Calu3 (cell line): ENCODE measurements at regions of chr13 and their contacts with region 1.

Region 1: DNA sequence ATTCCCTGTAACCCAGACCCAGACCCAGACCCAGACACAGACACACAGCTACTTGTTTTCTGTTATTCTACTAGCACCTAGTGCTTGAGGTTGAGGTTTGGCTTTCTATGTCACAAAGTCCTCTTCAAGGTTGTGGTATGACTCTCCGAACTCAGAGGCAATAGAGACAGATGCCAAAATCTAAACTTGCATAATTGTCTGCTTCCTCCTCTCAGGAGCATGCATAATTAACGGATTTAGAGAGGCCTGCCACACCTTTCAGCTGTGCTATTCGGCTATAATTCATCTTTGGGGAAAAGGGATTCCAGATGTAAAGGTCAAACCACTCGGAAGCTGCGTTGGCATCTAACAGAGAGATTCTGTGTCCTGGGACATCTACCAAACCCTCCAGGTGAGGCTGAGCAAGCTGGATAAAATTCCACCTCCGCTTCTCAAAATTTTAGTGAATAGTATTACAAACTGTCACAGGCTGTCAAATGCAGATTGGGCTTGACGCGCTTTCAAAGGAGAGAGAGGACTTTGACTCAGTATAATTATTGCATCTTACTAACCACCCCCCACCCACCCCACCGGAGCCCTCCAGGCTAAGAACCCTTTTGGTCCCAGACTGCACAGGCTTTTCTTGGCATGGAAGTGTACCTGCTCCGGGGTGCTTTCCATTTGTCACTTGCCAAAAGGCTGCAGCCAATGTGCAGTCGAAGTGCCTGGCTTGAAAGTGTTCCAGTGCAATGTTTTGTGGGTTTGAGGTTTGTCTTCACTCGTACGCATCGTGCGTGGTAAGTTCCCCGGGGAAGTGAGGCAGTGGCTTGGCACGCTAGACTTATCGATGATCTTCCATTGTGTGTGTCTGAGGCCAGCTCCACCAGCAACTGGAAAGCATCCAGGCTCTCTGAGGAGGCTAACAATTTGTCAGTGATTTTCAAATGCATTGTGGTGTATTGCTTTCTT is 194.1 kb downstream of the TDRD3 start:
- DNase-seq: no peak
- H3K4me3 Mint-ChIP-seq: no peak overlapping the region
- H3K27ac Mint-ChIP-seq: no peak overlapping the region
- H3K4me1 Mint-ChIP-seq: no peaks in the 10 kb centered on the region
- H3K27me3 Mint-ChIP-seq: no peaks in the 10 kb centered on the region
- CTCF ChIP-seq: no peak

Region 2: DNA sequence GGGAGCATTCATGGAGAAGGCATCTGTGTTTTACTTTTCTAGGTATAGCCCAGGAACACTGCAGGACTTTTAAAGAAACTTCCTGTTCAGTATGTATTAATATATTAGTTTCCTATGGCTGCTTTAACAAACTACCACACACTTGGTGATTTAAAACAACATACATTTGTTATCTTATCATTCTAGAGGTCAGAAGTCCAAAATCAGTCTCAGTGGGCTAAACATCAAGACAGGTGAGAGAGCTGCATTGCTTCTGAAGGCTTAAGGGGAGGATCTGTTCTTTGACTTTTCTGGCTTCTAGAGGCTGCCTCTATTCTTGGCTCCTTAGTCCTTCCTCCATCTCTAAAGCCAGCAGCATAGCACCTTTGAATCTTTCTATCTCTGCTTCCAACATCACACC is 389.8 kb before region 1 on chr13:
- CTCF ChIA-PET with region 1: no interaction called
- intact Hi-C with region 1: no loop called
- DNase-seq: no peak
- H3K4me3 Mint-ChIP-seq: no peak overlapping the region
- H3K27ac Mint-ChIP-seq: no peak overlapping the region
- H3K4me1 Mint-ChIP-seq: no peaks in the 10 kb centered on the region
- H3K27me3 Mint-ChIP-seq: no peaks in the 10 kb centered on the region
- CTCF ChIP-seq: no peak

Region 3: DNA sequence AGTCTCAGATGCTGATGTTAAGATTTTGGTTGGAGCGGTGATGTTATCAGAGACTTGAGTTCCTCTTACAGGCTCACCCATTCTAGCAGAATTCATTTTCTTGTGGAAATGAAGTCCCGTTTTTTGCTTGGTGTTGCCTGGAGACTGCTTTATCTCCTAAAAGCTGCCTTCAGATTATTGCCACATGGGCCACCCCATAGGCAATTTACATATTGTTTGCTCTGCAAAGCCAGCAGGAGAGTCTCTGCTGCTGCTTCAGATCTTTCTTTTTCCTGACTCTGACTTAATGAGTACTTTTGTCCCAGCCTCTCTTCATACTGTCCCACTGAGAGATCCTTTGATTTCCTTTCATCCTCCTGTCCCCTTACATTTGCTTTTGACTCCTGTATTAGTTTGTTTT is 79.4 kb before region 1 on chr13:
- CTCF ChIA-PET with region 1: no interaction called
- intact Hi-C with region 1: loop called (anchors 2 kb)
- DNase-seq: no peak
- H3K4me3 Mint-ChIP-seq: no peak overlapping the region
- H3K27ac Mint-ChIP-seq: no peak overlapping the region
- H3K4me1 Mint-ChIP-seq: no peaks in the 10 kb centered on the region
- H3K27me3 Mint-ChIP-seq: no peaks in the 10 kb centered on the region
- CTCF ChIP-seq: no peak

Region 4: GRCh38 chr13:60716313-60716712 is 125.2 kb after region 1 on chr13:
- CTCF ChIA-PET with region 1: no interaction called
- intact Hi-C with region 1: no loop called
- DNase-seq: no peak
- H3K4me3 Mint-ChIP-seq: no peak overlapping the region
- H3K27ac Mint-ChIP-seq: no peak overlapping the region
- H3K4me1 Mint-ChIP-seq: no peaks in the 10 kb centered on the region
- H3K27me3 Mint-ChIP-seq: no peaks in the 10 kb centered on the region
- CTCF ChIP-seq: no peak